ENCODE measurements at regions of chr10 and their contacts with region 1.

Region 1: DNA sequence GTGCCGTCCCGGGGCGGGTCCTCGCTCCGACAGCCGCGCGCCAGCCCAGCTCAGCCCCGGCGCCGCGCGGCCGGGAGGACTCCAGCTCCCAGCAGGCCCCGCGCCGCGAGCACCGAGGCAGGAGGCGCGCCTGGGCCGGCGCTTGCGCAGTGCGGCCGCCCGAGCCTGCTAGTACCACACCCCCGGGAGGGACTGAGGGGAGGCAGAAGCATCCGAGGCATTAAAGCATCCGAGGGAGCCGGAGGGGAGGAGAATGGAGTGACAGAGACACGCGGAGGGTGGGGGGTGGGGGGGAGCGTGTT is at the start of gene GRK5:
- DNase-seq: peak; percentile 93
- H3K4me3 Mint-ChIP-seq: peak within 1 kb of the TSS; percentile 85
- H3K27ac Mint-ChIP-seq: peak within 1 kb of the TSS; percentile 90
- H3K4me1 Mint-ChIP-seq: peaks cover 33% of the 10 kb centered on the region
- H3K27me3 Mint-ChIP-seq: no peaks in the 10 kb centered on the region
- total RNA-seq, gene GRK5: 27.1 to 29.7 TPM

Region 2: DNA sequence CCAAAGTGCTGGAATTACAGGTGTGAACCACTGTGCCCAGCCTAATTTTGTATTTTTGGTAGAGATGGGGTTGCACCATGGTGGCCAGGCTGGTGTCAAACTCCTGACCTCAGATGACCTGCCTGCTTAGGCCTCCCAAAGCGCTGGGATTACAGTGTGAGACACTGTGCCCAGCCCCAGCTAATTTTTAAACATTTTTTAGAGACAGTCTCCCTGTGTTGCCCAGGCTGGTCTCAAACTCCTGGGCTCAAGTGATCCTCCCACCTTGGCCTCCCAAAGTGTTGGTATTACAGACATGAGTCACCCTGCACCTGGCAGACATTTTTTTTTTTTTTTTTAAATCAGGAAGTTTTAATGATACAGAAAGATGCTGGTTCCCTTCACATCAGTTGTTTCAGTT is 87.9 kb before region 1 on chr10:
- CTCF ChIA-PET with region 1: no interaction called
- intact Hi-C with region 1: no loop called
- DNase-seq: no peak
- H3K4me3 Mint-ChIP-seq: no peak overlapping the region
- H3K27ac Mint-ChIP-seq: no peak overlapping the region
- H3K4me1 Mint-ChIP-seq: peaks cover 3% of the 10 kb centered on the region
- H3K27me3 Mint-ChIP-seq: no peaks in the 10 kb centered on the region

Region 3: DNA sequence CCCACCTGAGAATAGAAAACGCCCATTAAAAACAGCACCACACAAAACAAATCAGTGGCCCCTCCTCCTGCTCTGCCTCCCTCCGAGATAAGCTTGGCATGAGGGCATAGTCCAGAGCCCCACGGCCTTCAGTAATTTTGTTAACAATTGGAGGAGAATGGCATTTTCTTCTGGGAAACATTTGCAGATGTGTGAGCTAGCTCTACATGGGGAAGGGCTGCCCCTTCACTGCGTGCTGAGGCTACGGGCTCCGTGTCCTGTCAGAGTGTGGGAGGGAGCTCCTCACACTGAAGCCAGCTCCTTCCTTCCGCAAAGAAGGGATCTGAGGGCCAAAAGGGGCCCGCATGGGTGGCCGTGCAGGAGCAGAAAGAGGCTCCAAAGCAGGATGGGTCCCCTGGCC is 15.2 kb after region 1 on chr10:
- CTCF ChIA-PET with region 1: interaction called, 11 read pairs
- intact Hi-C with region 1: loop called (anchors 1 kb)
- DNase-seq: no peak
- H3K4me3 Mint-ChIP-seq: no peak overlapping the region
- H3K27ac Mint-ChIP-seq: no peak overlapping the region
- H3K4me1 Mint-ChIP-seq: peaks cover 22% of the 10 kb centered on the region
- H3K27me3 Mint-ChIP-seq: no peaks in the 10 kb centered on the region

Region 4: GRCh38 chr10:119285489-119286267 is 78.4 kb after region 1 on chr10:
- CTCF ChIA-PET with region 1: interaction called, 8 read pairs
- intact Hi-C with region 1: loop called (anchors 1 kb)
- DNase-seq: no peak
- H3K4me3 Mint-ChIP-seq: peak overlapping the region; percentile 55
- H3K27ac Mint-ChIP-seq: peak overlapping the region; percentile 78
- H3K4me1 Mint-ChIP-seq: peaks cover 81% of the 10 kb centered on the region
- H3K27me3 Mint-ChIP-seq: no peaks in the 10 kb centered on the region

Region 5: GRCh38 chr10:119370111-119370741 is 162.9 kb after region 1 on chr10:
- CTCF ChIA-PET with region 1: interaction called, 4 read pairs
- intact Hi-C with region 1: loop called (anchors 1 kb)
- DNase-seq: peak; percentile 15
- H3K4me3 Mint-ChIP-seq: no peak overlapping the region
- H3K27ac Mint-ChIP-seq: no peak overlapping the region
- H3K4me1 Mint-ChIP-seq: peaks cover 33% of the 10 kb centered on the region
- H3K27me3 Mint-ChIP-seq: no peaks in the 10 kb centered on the region

Region 6: GRCh38 chr10:119517235-119518141 is 310.2 kb after region 1 on chr10:
- CTCF ChIA-PET with region 1: interaction called, 3 read pairs
- intact Hi-C with region 1: loop called (anchors 1 kb)
- DNase-seq: peak; percentile 83
- H3K4me3 Mint-ChIP-seq: peak overlapping the region; percentile 43
- H3K27ac Mint-ChIP-seq: peak overlapping the region; percentile 90
- H3K4me1 Mint-ChIP-seq: peaks cover 70% of the 10 kb centered on the region
- H3K27me3 Mint-ChIP-seq: no peaks in the 10 kb centered on the region

Region 7: DNA sequence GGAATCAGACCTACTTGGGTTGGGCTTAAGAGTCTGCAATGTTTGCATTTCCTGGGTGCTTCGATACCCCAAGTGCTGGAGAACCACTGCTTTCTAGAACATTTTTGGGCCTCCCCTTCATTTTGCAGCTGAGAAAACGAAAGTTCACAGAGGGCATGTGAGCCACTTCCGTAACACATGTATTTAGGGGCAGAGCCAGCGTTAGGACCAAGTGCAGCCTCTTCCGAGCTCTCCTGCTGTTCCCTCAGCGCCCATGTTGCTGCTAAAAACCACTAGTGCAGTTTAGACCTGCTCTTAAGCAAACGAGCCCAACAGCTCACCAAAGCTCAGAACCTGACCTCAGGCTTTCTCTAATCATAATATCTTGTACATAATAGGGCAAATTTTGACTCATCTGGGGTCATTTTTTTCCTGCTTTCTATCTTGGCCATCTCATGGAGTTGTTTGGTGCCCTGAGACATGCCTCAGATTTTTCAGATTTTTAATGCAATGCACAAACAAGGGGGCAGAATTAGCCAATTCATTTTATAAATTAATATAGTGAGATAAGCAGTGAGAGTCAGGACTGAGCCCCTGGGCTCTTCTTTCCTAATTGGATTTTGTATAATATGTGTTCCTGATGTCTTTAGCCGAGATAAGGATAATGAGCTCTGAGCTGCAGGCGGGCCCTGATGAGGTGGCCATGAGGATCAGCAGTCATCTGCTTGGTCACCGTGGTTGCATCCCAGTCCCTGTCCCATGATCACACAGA is 456.7 kb after region 1 on chr10:
- CTCF ChIA-PET with region 1: no interaction called
- intact Hi-C with region 1: no loop called
- DNase-seq: peak; percentile 53
- H3K4me3 Mint-ChIP-seq: peak overlapping the region; percentile 57
- H3K27ac Mint-ChIP-seq: peak overlapping the region; percentile 85
- H3K4me1 Mint-ChIP-seq: peaks cover 54% of the 10 kb centered on the region
- H3K27me3 Mint-ChIP-seq: no peaks in the 10 kb centered on the region

Region 8: DNA sequence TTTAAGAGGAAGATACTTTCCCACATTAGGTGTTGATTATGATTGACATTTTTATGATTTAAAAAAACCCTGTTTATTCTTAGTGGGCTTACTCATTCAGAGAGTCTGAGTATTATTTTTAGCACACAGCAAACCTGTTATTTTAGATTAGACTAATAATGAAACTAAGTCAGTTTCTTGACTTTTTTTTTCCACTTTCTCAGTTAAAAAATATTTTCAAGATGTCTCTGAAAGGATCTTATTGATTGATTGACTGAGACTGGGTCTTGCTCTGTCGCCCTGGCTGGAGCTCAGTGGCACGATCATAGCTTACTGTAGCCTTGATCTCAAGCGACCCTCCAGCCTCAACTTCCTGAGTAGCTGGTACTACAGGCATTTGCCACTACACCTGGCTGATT is 498.1 kb after region 1 on chr10:
- CTCF ChIA-PET with region 1: no interaction called
- intact Hi-C with region 1: loop called (anchors 5 kb)
- DNase-seq: no peak
- H3K4me3 Mint-ChIP-seq: no peak overlapping the region
- H3K27ac Mint-ChIP-seq: peak overlapping the region; percentile 96
- H3K4me1 Mint-ChIP-seq: peaks cover 81% of the 10 kb centered on the region
- H3K27me3 Mint-ChIP-seq: no peaks in the 10 kb centered on the region

Region 9: GRCh38 chr10:121043124-121043849 is 1836.0 kb after region 1 on chr10:
- CTCF ChIA-PET with region 1: no interaction called
- intact Hi-C with region 1: no loop called
- DNase-seq: no peak
- H3K4me3 Mint-ChIP-seq: no peak overlapping the region
- H3K27ac Mint-ChIP-seq: no peak overlapping the region
- H3K4me1 Mint-ChIP-seq: no peaks in the 10 kb centered on the region
- H3K27me3 Mint-ChIP-seq: peaks cover 5% of the 10 kb centered on the region

Measured in activated naive CD4-positive, alpha-beta T cell treated with anti-CD3 and anti-CD28 coated beads for 36 hours (primary cell).